GM23248 (cell line): ENCODE measurements at regions of chr13 and their contacts with region 1.

Region 1: DNA sequence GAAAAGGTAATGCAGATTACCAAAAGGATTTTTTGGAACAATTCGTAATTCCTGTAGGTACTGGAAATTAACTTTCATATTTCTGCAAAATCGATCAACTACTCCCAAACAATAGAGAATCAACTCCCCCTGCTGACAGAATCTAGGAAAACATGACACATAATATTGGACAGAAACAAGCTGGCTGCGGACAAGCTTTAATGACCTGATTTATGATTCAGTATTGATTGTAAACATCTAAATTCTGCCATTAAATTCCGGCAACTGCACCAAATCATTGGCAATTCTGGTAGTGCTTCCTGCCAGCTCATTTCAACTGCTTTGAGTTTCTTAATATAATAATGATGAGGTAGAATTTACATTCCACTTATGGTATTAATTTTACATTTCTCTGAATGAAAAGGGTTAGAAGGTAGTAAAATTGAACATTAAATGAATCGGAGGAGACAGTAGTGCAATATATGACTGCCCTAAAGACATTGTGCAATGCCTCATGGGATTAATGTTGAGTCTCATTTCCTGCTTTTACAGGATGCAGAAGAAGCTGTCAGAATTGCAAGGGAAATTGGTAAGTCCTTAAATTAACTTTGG is 146.5 kb downstream of the PCCA start:
- DNase-seq: peak; percentile 71
- H3K4me3 ChIP-seq: peak overlapping the region; percentile 58
- H3K27ac ChIP-seq: peak overlapping the region; percentile 63
- H3K4me1 ChIP-seq: peaks cover 22% of the 10 kb centered on the region
- H3K27me3 ChIP-seq: no peaks in the 10 kb centered on the region

Region 2: GRCh38 chr13:99656092-99656745 is 579.2 kb before region 1 on chr13:
- in situ Hi-C with region 1: loop called (anchors 10 kb)
- DNase-seq: peak; percentile 79
- H3K4me3 ChIP-seq: peak overlapping the region; percentile 55
- H3K27ac ChIP-seq: peak overlapping the region; percentile 67
- H3K4me1 ChIP-seq: peaks cover 7% of the 10 kb centered on the region
- H3K27me3 ChIP-seq: no peaks in the 10 kb centered on the region

Region 3: DNA sequence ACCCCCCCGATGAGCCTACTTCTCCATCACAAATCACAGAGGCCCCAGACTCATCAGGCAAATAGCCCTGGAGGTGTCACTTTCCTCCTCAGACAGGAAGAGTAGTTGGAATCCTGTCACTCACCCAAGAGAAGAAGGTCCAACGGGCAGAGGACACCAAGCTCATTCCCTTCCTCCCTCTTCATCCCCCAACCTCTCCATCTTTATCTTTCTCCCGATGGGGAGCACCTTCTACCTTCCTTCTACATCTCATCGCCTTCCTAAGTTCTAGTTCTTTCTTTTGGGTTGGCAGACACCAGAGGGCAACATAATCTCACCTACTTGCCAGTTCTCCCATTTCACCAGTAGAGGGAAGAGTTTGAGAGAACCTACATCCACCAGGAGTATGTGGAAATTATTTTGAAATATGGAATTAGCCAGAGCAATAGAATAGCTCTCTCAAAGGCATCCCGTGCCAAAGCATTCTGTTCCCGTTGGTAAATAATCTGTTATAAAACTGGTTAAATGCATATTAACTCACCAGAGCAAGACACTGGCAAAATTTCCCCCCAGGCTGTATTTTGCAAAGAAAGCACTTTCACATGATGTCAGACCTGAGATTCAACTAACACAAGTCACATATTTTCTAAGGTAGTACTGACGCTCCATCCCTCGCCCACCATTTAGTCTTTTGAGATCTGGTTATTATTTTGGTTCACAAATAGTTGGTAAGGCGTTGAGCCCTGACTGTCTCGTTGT is 318.9 kb before region 1 on chr13:
- in situ Hi-C with region 1: loop called (anchors 10 kb)
- DNase-seq: peak; percentile 79
- H3K4me3 ChIP-seq: no peak overlapping the region
- H3K27ac ChIP-seq: no peak overlapping the region
- H3K4me1 ChIP-seq: no peaks in the 10 kb centered on the region
- H3K27me3 ChIP-seq: peaks cover 18% of the 10 kb centered on the region

Region 4: GRCh38 chr13:99955747-99956472 is 279.5 kb before region 1 on chr13:
- in situ Hi-C with region 1: no loop called
- DNase-seq: peak; percentile 69
- H3K4me3 ChIP-seq: peak overlapping the region; percentile 34
- H3K27ac ChIP-seq: no peak overlapping the region
- H3K4me1 ChIP-seq: 0 out of 2 replicates have a peak, but pooled peaks cover 3% of the 10 kb centered on the region
- H3K27me3 ChIP-seq: peaks cover 91% of the 10 kb centered on the region

Region 5: DNA sequence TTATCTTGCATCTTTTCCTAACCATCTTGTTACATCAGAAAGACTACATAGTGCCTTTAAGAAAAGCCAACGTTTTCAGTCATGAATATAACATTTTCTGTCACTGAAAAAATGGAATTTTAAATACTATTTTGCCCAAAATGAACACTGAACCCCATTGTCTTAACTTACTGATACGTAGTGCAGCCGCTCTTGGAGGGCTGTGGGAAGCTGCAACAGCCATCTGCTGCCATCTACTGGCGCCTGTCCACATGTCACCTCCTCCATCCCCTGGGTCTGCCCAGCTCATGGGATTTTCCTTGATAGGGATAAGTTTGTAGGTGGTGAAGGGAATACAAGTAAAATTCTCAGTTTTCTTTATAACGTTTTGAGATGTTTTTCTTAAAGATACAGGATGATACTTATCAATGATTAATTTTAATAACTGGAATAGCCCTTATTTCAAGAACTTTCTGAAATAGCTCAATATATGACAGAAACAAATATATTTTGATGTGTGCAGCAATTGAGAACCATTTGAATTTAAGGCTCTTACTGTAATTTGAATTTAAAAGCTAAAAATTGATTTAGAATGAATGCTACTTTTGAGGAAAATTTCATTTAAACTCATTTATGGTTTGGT is 279.5 kb after region 1 on chr13:
- in situ Hi-C with region 1: loop called (anchors 25 kb)
- DNase-seq: peak; percentile 86
- H3K4me3 ChIP-seq: no peak overlapping the region
- H3K27ac ChIP-seq: no peak overlapping the region
- H3K4me1 ChIP-seq: no peaks in the 10 kb centered on the region
- H3K27me3 ChIP-seq: no peaks in the 10 kb centered on the region